Calu3 (cell line): ENCODE measurements at regions of chr1 and their contacts with region 1.

Region 1: GRCh38 chr1:204198151-204198994 is 2.1 kb upstream of the KISS1 start:
- DNase-seq: peak; percentile 81
- H3K4me3 Mint-ChIP-seq: no peak overlapping the region
- H3K27ac Mint-ChIP-seq: no peak overlapping the region
- H3K4me1 Mint-ChIP-seq: peaks cover 31% of the 10 kb centered on the region
- H3K27me3 Mint-ChIP-seq: peaks cover 2% of the 10 kb centered on the region
- CTCF ChIP-seq: peak; percentile 32

Region 2: DNA sequence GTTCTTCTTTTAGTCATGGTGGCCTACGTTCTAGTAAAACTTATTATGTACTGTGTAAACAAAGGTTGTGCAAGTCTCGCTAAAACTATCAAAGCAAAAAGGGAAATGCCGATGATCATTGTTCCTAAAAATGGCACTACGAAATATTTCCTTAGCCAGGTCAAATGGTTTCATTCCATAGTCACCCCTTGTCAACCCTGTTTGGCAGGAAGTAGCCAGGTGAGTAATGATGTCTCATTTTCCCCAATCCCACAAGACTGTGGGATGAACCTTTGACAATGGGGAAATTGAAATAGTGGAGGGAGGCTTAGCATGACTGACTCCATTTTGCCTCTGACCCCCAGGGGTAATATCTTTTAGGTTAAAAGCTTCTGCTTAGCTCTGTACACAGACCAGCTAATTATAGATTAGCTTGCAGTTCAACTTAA is 26.6 kb before region 1 on chr1:
- CTCF ChIA-PET with region 1: interaction called, 12 read pairs
- intact Hi-C with region 1: no loop called
- DNase-seq: peak; percentile 73
- H3K4me3 Mint-ChIP-seq: peak overlapping the region; percentile 45
- H3K27ac Mint-ChIP-seq: peak overlapping the region; percentile 84
- H3K4me1 Mint-ChIP-seq: no peaks in the 10 kb centered on the region
- H3K27me3 Mint-ChIP-seq: no peaks in the 10 kb centered on the region
- CTCF ChIP-seq: no peak